ENCODE measurements at regions of chr9 and their contacts with region 1.

Region 1: DNA sequence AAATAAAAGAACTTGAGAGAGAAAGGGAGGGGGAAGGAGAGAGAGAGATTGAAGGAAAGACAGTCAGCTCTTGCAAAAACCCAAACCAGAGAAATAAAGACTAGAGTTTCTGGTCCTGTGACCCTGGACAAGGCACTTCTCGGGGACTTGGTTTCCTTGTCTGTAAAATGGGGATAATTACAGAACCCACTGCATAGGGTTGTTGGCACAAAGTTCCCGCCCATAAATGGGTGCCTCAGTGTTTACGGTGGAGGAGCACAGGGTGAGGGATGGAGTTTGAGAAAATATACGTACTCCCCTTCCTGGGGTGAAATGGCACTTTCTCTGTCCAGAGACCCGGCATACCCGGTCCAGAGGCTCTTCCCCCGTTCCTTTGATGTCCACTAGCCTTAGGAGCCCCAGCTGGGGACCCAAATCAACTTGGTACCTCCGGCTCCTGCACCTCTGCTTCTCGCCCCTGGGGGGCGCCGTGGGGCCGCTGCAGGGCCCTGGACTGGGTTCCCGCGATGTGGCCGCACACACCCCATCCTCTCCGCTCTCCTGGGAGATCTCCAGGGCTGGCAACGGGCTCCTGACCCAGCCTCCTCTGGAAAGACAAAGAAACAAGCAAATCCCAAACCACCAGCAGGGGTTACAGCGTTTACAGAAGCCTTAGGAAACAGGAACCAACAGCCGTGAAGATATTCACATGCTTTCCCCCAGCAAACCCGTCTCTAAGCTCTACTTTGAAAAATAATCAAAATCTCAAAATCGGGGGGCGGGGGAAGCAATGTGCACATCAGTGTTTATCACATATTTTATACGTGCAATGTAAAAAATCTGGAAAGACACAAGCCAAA is 26.3 kb downstream of the PTGES start:
- DNase-seq: peak; percentile 76 to 93
- H3K4me3 ChIP-seq: no peak overlapping the region
- H3K27ac ChIP-seq: no peak overlapping the region
- H3K4me1 ChIP-seq: peaks cover 0 to 2% (median 0%) of the 10 kb centered on the region in 4 experiments; a peak in 1 of 7 replicates
- H3K27me3 ChIP-seq: no peaks in the 10 kb centered on the region
- CTCF ChIP-seq: peak; percentile 80 to 96 (median 91)
- EP300 ChIP-seq: 0 out of 3 replicates have a peak, but pooled peaks of 1 of the 2 experiments have one; percentile 43
- POLR2A ChIP-seq: no peak
- RAD21 ChIP-seq: peak; percentile 79 to 88

Region 2: DNA sequence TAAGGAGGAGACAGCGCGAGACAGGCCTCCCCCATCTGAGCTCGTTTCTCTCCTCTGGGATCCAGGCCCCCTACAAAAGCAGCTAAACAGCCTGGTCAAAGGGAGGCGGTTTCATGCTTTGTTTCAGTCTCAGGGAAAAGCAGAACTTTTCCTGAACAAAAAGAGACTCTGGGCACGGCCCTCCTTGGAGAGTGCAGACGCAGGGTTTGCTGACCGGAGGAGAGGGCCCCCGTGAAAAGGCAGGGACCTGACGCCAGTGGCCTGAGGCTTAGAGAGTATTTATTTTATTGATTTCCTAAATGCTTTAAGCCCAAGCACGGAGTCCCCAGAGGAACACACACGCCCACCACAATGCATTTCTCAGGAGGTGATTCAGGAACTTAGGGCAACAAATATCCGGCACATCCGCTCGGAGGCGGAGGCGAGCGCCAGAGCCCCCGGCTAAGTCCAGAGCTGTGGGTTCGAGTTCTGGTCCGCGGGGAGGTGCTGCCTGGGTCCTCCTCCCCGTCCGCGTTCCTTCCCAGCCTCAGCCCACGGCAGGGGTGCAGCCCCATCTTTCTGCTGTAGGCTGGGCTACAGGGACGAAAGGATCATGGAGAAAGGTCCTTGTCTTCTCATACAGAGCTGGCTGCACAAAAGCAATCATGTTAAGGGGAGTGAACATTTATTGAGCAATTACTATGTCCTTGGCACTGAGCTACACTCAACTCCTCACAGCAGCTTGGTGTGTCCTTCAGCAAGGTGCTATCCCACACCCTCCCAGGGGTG is 13.7 kb before region 1 on chr9:
- CTCF ChIA-PET with region 1: interaction called, 20 read pairs
- POLR2A ChIA-PET with region 1: interaction called, 3 read pairs
- DNase-seq: no peak
- H3K4me3 ChIP-seq: no peak overlapping the region
- H3K27ac ChIP-seq: no peak overlapping the region
- H3K4me1 ChIP-seq: peaks cover 0 to 13% (median 0%) of the 10 kb centered on the region in 4 experiments; a peak in 2 of 7 replicates
- H3K27me3 ChIP-seq: no peaks in the 10 kb centered on the region; a peak in 1 of 7 replicates
- CTCF ChIP-seq: no peak
- EP300 ChIP-seq: no peak
- POLR2A ChIP-seq: no peak
- RAD21 ChIP-seq: no peak

Region 3: DNA sequence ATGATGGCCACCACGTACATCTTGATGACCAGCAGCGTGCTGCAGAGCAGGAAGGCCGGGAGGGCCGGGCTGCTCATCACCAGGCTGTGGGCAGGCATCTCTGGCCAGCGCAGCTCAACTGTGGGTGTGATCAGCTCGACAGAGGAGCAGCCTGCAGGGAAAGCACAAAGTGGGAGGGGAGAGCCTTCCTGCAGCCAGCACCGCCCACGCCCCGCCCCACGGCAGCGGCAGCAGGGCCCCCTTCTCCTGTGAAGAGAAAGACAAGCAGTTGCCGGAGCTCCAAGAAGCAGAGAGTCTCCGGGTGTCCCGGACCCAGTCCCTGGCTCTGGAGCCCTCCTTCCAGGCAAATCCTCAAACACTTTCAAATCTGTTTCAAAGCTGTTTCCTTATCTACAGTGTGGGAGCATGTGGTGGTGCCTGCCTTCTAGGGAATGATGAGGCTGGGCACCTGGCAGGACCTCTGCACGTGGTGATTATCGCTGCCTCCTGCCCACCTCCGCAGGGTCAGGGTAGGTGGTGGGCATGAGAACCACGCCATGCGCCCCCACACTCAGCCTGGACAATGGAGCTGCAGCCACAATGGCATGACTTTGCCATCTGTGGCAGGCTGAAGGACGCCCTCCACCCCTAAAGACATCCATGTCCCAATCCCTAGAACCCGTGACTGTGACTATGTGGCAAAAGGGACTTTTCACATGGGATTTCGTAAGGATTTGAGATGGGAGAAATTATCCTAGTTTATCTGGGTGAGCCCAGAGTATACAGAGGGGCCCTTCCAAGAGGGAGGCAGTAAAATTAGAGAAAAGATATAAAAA is 26.6 kb after region 1 on chr9 and contains the start of gene PTGES:
- CTCF ChIA-PET with region 1: interaction called, 30 read pairs
- POLR2A ChIA-PET with region 1: no interaction called
- DNase-seq: peak in 1 of 2 experiments; percentile 78
- H3K4me3 ChIP-seq: peak within 1 kb of the TSS in 2 of 4 experiments; percentile 15 to 23; a peak in 3 of 8 replicates
- H3K27ac ChIP-seq: no peak within 1 kb of the TSS
- H3K4me1 ChIP-seq: peaks cover 0 to 12% (median 11%) of the 10 kb centered on the region in 4 experiments; a peak in 5 of 7 replicates
- H3K27me3 ChIP-seq: no peaks in the 10 kb centered on the region; a peak in 1 of 7 replicates
- CTCF ChIP-seq: no peak
- EP300 ChIP-seq: no peak
- POLR2A ChIP-seq: no peak
- RAD21 ChIP-seq: no peak
- total RNA-seq, gene PTGES: 3.2 TPM in 2 replicates

Region 4: GRCh38 chr9:129776938-129777768 is 50.6 kb after region 1 on chr9:
- CTCF ChIA-PET with region 1: interaction called, 113 read pairs
- POLR2A ChIA-PET with region 1: interaction called, 3 read pairs
- DNase-seq: no peak
- H3K4me3 ChIP-seq: no peak overlapping the region
- H3K27ac ChIP-seq: no peak overlapping the region
- H3K4me1 ChIP-seq: peaks cover 0 to 3% (median 0%) of the 10 kb centered on the region in 4 experiments; a peak in 3 of 7 replicates
- H3K27me3 ChIP-seq: no peaks in the 10 kb centered on the region
- CTCF ChIP-seq: no peak
- EP300 ChIP-seq: no peak
- POLR2A ChIP-seq: no peak
- RAD21 ChIP-seq: no peak

Measured in H1 (cell line).